ENCODE measurements at regions of chrX and their contacts with region 1.

Region 1: DNA sequence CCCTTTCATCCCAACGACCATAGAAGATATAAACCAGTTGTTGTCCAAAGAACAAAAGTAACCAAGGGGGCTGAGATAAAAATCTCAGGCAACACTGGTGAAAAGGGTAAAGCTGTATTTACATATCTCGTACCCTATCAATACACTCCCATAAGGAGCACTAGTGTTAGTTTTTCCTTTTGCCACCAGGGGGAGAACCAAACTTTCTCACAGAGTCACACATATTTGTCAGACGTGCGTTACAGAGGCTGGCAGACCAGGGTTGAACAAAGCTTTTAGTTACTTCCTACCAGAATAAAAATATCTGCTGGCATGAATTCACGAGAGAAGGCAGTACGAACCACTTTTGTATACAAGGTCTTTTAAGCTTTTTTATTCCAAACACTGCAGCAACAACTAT is 88.3 kb downstream of the AMELX start:
- DNase-seq: peak; percentile 20
- H3K4me3 ChIP-seq: no peak overlapping the region
- H3K27ac ChIP-seq: no peak overlapping the region
- H3K4me1 ChIP-seq: no peaks in the 10 kb centered on the region
- H3K27me3 ChIP-seq: no peaks in the 10 kb centered on the region
- CTCF ChIP-seq: peak; percentile 78
- EP300 ChIP-seq: no peak
- RAD21 ChIP-seq: peak; percentile 63

Region 2: DNA sequence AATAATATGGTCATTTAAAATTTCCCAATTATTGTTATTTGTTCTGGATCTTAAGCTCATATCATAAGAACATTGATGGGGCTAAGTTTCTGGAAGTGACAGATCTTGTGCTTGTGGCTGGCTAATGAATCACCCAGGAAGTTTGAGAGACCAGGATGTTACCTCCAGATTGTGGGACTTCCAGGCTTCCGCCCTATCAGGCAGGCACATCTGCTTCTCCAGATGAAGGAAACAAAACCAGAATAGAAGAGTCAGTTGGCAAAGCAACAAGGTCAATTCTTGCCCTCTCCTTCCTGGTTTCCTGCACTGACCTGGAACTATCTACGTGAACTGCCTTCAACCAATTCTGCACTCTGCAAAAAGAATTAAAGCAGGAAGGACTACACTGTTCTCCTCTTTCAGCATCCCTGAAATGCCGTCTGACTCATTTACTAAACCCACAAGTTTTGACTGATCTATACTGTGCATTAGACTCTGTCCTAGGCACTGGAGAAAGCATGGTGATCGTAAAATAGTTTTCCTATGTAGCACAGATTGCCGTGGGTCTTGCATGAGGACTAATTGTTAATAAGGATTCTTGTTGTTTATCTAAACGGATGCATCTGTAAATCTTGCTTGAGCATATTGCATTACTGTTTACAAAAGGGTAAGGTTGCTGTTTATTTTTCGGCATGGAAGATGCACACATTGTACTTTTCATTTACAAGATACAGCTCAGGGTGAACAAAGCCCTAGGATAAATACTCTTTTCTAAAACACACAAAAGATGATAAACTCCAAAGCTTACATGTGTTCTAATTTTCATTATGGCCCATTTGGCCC is 13.6 kb before region 1 on chrX:
- CTCF ChIA-PET with region 1: interaction called, 16 read pairs
- POLR2A ChIA-PET with region 1: no interaction called
- DNase-seq: no peak
- H3K4me3 ChIP-seq: no peak overlapping the region
- H3K27ac ChIP-seq: no peak overlapping the region
- H3K4me1 ChIP-seq: no peaks in the 10 kb centered on the region
- H3K27me3 ChIP-seq: no peaks in the 10 kb centered on the region
- CTCF ChIP-seq: no peak
- EP300 ChIP-seq: no peak
- RAD21 ChIP-seq: no peak

Region 3: GRCh38 chrX:11393949-11394654 is 12.6 kb after region 1 on chrX:
- CTCF ChIA-PET with region 1: interaction called, 11 read pairs
- POLR2A ChIA-PET with region 1: no interaction called
- DNase-seq: no peak
- H3K4me3 ChIP-seq: no peak overlapping the region
- H3K27ac ChIP-seq: no peak overlapping the region
- H3K4me1 ChIP-seq: no peaks in the 10 kb centered on the region
- H3K27me3 ChIP-seq: no peaks in the 10 kb centered on the region
- CTCF ChIP-seq: no peak
- EP300 ChIP-seq: no peak
- RAD21 ChIP-seq: no peak